ENCODE measurements at regions of chrX and their contacts with region 1.

Region 1: GRCh38 chrX:101040197-101040596 is 11.7 kb downstream of the TRMT2B start:
- DNase-seq: no peak
- H3K4me3 ChIP-seq: no peak overlapping the region
- H3K27ac ChIP-seq: no peak overlapping the region
- H3K4me1 ChIP-seq: no peaks in the 10 kb centered on the region
- H3K27me3 ChIP-seq: no peaks in the 10 kb centered on the region
- CTCF ChIP-seq: no peak

Region 2: GRCh38 chrX:101206471-101206870 is 166.3 kb after region 1 on chrX:
- intact Hi-C with region 1: loop called (anchors 10 kb)
- DNase-seq: no peak
- H3K4me3 ChIP-seq: no peak overlapping the region
- H3K27ac ChIP-seq: no peak overlapping the region
- H3K4me1 ChIP-seq: peaks cover 0 to 8% (median 0%) of the 10 kb centered on the region in 4 donors
- H3K27me3 ChIP-seq: no peaks in the 10 kb centered on the region
- CTCF ChIP-seq: peak; percentile 31 to 36

Measured in tibial artery (tissue), 4 donors.